A673 (cell line): ENCODE measurements at regions of chr5 and their contacts with region 1.

Region 1: DNA sequence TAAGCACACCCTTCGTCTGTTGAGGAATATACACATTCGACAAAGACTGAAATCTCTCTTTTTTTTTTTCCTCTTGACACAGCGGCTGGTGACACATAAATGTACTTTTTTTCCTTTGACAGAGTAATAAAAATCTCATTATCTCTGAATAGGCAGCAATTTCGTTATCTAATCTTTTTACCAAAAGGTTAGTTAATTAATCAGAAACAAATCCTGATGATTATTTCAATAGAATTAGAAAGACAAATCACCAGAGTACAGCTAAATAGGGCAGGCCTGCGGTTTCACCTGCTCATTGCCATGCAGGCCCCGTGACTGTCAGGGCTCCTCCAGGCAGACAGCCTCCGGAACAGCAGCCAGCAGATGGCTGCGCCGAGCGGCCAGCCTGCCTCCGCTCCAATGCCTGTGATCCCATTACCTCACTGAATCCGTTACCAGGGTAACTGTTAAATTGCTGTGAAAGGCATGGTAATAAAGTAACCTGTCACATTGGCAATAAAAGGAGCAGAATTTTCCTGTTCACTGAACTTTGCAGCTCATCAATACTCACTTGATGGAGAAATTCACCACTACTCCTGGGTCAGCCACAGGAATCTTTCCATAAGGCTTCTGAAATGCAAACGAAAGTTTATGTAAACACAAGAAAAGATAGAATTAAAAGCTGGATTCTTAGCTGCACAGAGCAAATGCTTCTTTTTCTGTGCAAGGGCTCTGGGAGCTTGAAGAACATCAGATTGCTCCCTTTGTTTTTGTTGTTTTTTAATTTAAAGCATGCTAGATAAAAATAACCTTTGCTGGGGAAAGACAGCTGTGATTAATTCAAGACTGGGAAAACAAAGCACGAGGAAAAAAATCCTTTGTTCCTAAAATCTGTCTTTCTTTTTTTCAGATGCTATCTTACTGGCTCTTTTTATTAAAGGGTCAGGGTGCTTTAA is 666.4 kb upstream of the ZNF608 start:
- DNase-seq: peak; percentile 91
- H3K4me3 ChIP-seq: no peak overlapping the region
- H3K27ac ChIP-seq: no peak overlapping the region
- H3K4me1 ChIP-seq: peaks cover 55% of the 10 kb centered on the region
- H3K27me3 ChIP-seq: no peaks in the 10 kb centered on the region
- CTCF ChIP-seq: peak; percentile 67

Region 2: GRCh38 chr5:125372694-125373631 is 39.9 kb before region 1 on chr5:
- CTCF ChIA-PET with region 1: interaction called, 11 read pairs
- POLR2A ChIA-PET with region 1: interaction called, 5 read pairs
- intact Hi-C with region 1: loop called (anchors 2 kb)
- DNase-seq: peak; percentile 98
- H3K4me3 ChIP-seq: no peak overlapping the region
- H3K27ac ChIP-seq: peak overlapping the region; percentile 60
- H3K4me1 ChIP-seq: peaks cover 71% of the 10 kb centered on the region
- H3K27me3 ChIP-seq: no peaks in the 10 kb centered on the region
- CTCF ChIP-seq: no peak

Region 3: GRCh38 chr5:125463466-125464092 is 50.8 kb after region 1 on chr5:
- CTCF ChIA-PET with region 1: no interaction called
- POLR2A ChIA-PET with region 1: interaction called, 11 read pairs
- intact Hi-C with region 1: no loop called
- DNase-seq: peak; percentile 72
- H3K4me3 ChIP-seq: no peak overlapping the region
- H3K27ac ChIP-seq: no peak overlapping the region
- H3K4me1 ChIP-seq: no peaks in the 10 kb centered on the region
- H3K27me3 ChIP-seq: no peaks in the 10 kb centered on the region
- CTCF ChIP-seq: no peak

Region 4: DNA sequence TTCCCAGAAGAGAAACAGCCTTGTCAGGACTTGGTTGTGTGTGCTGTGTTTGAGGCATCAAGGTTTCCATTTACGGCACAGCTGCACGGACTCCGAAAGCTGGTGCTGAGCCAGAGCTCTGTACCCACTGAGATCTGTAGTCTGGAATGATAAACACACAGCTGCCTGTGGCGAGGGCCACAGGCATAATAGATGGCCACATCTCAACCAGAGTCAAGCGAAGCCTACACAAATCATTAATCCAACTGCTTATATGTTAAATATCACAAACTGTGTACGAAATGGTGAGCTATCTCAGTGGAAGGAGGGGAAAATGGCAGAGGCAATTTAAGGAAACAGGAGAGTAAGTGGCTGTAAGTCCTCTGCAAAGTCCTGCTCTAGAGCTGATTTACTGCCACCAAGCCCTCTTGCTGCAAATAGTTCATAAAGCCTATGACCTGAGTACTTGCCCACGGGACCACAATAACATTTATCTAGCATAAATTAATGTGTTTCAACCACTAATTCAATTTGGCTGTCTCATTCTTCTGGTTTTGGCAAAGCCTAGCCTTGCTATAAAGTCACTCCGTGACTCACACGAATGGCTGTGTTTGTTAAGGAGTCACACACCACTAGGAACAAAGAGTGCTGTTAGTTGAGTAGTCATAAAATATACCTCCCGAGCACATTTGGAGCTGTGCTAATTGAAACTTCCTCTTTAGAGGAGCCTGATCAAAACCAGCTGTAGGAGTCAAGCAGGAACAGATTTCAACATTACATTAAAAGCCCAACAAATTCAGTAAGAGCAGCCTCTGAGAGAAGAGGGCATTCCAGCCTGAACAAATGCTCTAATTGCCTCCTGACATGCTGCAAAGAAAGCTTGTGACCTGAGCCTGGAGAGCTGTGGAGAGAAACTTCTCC is 72.2 kb after region 1 on chr5:
- CTCF ChIA-PET with region 1: no interaction called
- POLR2A ChIA-PET with region 1: no interaction called
- intact Hi-C with region 1: loop called (anchors 2 kb)
- DNase-seq: peak; percentile 99
- H3K4me3 ChIP-seq: peak overlapping the region; percentile 13
- H3K27ac ChIP-seq: peak overlapping the region; percentile 78
- H3K4me1 ChIP-seq: peaks cover 44% of the 10 kb centered on the region
- H3K27me3 ChIP-seq: no peaks in the 10 kb centered on the region
- CTCF ChIP-seq: no peak